Cardiac septum (tissue), 1 donor: ENCODE measurements at regions of chr14 and their contacts with region 1.

Region 1: DNA sequence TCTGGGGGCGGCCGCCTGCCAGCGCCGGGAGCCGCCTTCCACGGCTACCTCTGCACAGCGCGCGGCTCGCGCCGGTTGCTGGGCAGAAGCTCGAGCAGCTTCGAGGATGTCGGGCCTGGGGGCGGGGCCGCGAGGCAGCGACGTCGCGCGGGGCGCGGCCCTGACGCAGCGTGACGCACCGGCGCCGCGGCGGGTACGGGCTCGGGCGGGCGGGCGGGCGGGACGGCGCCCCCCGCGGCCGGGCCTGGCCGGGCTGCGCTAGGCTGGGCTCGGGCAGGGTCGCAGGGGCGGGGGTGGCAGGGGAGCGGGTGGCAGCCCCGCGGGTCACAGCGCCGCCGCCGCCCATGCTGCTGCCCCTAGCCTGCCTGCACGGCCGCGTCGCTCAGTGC is at the start of gene BTBD6:
- DNase-seq: peak; percentile 94
- total RNA-seq, gene BTBD6: 34.9 TPM

Region 2: DNA sequence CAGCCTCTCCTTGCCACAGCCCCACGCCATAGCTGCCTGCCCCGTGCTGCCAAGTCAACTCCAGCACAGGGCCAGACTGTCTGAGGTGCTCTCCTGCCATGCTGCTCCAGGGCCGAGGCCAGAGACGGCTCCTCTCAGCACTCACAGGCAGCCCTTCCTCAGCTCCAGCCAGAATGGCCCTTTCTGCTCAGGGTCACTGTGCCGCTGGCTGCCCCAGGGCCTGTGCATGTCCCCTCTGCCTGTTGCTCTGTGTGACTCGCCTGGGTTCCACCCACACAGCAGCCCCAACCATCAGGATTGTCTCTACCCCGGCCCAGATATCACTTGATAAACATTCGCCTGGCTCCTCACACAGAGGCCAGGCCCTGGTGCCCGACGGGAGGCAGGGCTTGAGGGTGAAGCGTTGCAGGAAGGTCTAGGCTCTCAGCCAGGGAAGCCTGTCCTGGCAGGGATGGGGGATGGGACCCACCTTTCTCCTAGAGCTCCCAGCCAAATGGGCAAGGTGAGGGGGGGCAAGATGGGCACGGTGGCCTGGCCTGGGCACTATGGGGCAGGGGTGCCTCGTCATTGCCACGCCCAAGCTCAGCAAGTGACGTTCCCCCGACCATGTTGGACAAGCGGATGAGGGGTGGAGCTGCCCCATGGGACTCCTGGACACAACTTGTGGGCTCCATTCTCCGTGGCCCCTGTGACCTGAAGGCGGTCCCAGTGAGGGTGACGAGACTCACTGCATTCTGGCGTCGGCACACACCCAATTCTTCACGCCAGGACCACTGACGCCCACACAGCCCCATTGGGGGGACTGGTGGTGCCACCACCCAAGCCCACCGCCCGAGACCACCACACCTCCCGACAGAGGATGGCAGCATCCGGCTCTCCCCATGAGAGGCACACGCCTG is 27.4 kb before region 1 on chr14:
- intact Hi-C with region 1: loop called (anchors 1 kb)
- DNase-seq: no peak